ENCODE measurements at regions of chr3 and their contacts with region 1.

Region 1: GRCh38 chr3:103167850-103168249 is 733.0 kb downstream of the ZPLD1 start:
- DNase-seq: no peak
- ATAC-seq: no peak
- H3K4me3 ChIP-seq: no peak overlapping the region
- H3K27ac ChIP-seq: no peak overlapping the region
- H3K4me1 ChIP-seq: no peaks in the 10 kb centered on the region
- H3K27me3 ChIP-seq: no peaks in the 10 kb centered on the region
- CTCF ChIP-seq: no peak

Region 2: GRCh38 chr3:103752986-103753385 is 585.1 kb after region 1 on chr3:
- CTCF ChIA-PET with region 1: no interaction called
- POLR2A ChIA-PET with region 1: interaction called, 12 read pairs
- in situ Hi-C with region 1: no loop called
- intact Hi-C with region 1: no loop called
- DNase-seq: no peak
- ATAC-seq: no peak
- H3K4me3 ChIP-seq: no peak overlapping the region
- H3K27ac ChIP-seq: no peak overlapping the region
- H3K4me1 ChIP-seq: no peaks in the 10 kb centered on the region
- H3K27me3 ChIP-seq: no peaks in the 10 kb centered on the region
- CTCF ChIP-seq: no peak

Measured in Panc1 (cell line).